ENCODE measurements at regions of chr12 and their contacts with region 1.

Region 1: GRCh38 chr12:62435303-62436163 is 31.1 kb upstream of the MON2 start:
- DNase-seq: no peak
- H3K4me3 ChIP-seq: peak overlapping the region; percentile 62
- CTCF ChIP-seq: peak; percentile 74

Region 2: DNA sequence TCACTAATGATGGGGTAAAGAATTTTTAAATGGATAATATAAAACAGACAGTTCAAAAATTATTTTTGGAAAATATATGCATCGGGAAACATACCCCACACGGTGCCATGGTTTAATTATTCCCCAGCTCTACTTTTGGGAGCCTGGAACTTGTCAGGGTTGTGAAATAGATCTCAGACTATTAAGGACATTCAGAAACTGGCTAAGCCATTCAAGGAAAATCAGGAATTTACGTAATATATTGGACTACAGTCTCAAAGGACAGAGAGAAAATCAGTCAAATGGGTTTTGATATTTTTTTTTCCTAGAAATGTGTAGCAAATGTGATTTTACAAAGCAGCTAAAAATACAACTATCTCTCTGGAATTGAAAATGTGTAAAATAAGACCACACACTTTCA is 26.5 kb before region 1 on chr12:
- CTCF ChIA-PET with region 1: interaction called, 16 read pairs
- POLR2A ChIA-PET with region 1: no interaction called
- DNase-seq: no peak
- H3K4me3 ChIP-seq: no peak overlapping the region
- CTCF ChIP-seq: no peak

Region 3: GRCh38 chr12:62457681-62458080 is 22.1 kb after region 1 on chr12:
- CTCF ChIA-PET with region 1: interaction called, 14 read pairs
- POLR2A ChIA-PET with region 1: no interaction called
- DNase-seq: no peak
- H3K4me3 ChIP-seq: no peak overlapping the region
- CTCF ChIP-seq: no peak

Region 4: DNA sequence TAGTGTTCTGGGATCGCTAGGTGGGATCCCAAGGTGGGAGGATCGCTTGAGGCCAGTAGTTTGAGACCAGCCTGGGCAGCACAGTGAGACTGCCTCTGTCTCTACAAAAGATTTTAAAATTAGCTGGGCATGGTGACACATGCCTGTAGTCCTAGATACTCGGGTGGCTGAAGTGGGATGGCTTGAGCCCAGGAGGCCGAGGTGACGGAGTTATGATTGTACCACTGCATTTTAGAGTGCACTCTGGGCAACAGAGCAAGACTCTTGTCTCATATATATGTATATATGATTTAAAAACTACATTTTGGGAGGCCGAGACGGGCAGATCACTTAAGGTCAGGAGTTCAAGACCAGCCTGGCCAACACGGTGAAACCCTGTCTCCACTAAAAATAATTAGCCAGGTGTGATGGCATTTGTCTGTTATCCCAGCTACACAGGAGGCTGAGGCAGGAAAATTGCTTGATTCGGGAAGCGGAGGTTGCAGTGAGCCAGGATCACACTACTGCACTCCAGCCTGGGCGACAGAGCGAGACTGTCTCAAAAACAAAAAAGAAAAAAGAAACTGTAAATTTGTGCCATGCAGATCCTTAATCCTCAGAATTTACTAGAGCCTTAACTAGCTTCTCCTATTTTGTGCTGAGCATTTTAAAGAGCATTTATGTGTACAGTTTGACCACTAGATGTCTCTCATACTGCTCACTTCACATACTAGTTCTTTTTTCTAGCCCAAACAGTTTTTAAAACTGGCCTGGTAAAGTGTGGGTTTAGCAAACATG is 145.9 kb after region 1 on chr12:
- CTCF ChIA-PET with region 1: interaction called, 25 read pairs
- POLR2A ChIA-PET with region 1: no interaction called
- DNase-seq: no peak
- H3K4me3 ChIP-seq: no peak overlapping the region
- CTCF ChIP-seq: peak; percentile 51

Region 5: DNA sequence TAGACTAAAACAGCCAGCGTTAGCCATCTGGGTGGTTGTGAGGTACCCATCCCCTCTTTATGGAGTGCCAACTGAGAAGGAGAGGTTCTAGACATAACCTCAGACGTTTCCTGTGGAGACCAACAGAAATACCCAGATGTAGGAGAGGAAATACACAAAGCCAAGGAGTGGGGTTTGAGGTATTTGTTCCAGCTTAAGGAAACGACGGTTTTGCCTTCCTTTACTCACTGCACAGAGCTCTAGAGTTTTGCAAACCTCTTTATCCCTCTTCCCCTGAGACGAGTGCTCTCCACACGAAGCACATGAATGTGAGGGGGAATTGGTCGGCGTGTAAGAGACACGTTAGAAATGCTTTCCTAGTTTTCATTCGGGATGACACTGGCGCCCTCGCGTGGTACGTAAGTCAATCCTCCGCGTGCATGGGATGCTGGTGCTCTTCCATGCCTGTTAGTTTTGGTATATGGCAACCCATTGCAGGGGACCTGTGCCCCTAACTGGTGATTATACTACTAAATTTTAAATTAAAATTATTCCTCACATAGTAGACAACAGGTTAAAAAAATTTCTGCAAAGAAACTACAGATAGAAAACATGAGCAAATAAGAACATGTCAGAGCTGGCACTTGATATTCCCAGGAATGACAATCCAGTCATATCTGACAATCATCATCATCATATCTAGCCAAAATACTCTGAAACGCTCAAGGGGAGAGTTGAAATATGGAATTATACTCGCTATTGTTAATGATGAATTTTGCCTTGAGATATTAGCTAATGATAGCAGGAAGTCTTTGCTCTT is 377.7 kb after region 1 on chr12:
- CTCF ChIA-PET with region 1: interaction called, 56 read pairs
- POLR2A ChIA-PET with region 1: no interaction called
- DNase-seq: no peak
- H3K4me3 ChIP-seq: peak overlapping the region; percentile 21; the same call in 1 of the 2 replicates
- CTCF ChIP-seq: peak; percentile 76

Measured in AG04449 (cell line).